ENCODE measurements at regions of chr6 and their contacts with region 1.

Region 1: DNA sequence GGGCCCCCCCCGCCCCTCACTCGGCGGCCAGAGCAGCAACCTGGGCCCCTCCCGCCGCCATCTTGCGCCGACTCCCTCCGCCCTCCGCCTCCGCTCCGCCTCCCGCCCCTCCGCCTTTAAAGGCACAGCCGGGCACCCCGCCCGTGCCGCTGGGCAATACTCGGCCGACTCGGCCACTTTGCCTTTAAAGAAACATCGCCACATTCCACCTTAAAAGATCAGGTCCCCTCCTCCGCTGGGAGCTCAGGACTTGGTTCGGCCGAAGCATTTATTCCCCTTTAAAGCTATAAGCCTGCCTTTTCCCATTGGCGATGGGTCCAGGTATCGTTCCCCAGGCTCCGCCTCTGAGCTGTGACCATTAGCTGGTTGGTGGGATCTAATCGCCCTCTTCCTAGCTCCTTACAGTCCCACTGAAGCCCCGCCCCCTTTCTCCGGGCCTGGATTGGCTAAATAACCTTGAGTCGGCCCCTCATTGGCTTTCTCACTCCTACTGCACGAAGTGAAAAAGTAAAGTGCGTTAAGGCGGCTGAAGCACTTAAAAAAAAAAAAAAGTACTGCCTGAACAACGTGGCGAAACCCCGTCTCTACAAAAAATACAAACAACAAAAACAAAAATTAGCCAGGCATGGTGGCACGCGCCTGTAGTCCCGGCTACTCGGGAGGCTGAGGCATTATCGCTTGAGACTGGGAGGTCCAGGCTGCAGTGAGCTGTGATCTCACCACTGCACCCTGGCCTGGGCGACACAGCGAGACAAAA is at the start of gene ZBTB22:
- DNase-seq: peak; percentile 92
- H3K4me3 ChIP-seq: peak within 1 kb of the TSS; percentile 56
- H3K27ac ChIP-seq: peak within 1 kb of the TSS; percentile 88 to 95
- H3K4me1 ChIP-seq: peaks cover 29 to 53% of the 10 kb centered on the region in 2 experiments; a peak in 3 of 4 replicates
- H3K27me3 ChIP-seq: no peaks in the 10 kb centered on the region
- CTCF ChIP-seq: no peak
- EP300 ChIP-seq: no peak
- RAD21 ChIP-seq: no peak
- polyA plus RNA-seq, gene ZBTB22: 19.5 and 22.2 TPM in 2 replicates

Region 2: DNA sequence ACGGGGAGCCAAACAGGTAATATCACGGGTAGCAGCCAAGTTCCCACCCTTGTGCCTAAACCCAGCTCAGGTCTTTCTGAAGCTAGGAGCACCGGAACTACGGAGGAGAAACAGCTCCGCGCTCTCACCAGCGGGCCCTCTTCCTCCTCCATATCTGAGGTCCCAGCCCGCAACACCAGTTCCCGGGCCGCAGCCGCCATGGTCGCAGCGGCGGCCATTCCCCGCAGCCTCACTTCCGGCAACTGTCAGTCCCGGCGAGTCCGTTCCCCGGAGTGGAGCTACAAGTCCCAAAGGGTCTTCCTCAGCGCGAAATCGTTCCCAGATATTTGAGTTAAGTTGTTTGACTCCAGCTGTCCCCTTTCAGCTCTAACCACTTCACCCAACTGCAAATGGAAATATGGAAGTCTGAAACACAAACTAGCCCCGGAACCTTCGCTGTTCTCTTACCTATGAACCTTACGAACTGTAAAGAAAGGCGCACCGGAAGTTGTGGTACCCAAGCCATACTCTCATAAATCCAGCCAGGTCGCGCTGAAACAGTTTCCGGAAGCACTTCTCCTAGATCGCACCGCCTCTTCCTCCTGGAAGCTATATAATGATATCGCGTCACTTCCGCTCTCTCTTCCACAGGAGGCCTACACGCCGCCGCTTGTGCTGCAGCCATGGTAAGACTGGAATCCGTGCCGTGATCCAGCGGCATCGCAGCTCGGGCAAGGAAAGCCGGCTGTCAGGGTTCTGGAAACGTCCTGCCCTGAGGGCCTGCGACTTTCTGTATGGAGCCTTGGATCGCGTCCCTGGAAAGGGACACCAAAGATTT is 46.2 kb before region 1 on chr6 and contains the starts of genes RPS18 and VPS52:
- CTCF ChIA-PET with region 1: interaction called, 3 read pairs
- POLR2A ChIA-PET with region 1: interaction called, 10 read pairs
- DNase-seq: peak; percentile 89
- H3K4me3 ChIP-seq: peak within 1 kb of the TSS; percentile 76 to 91
- H3K27ac ChIP-seq: peak within 1 kb of the TSS; percentile 88 to 99
- H3K4me1 ChIP-seq: peaks cover 30 to 39% of the 10 kb centered on the region in 2 experiments; a peak in 3 of 4 replicates
- H3K27me3 ChIP-seq: no peaks in the 10 kb centered on the region
- CTCF ChIP-seq: no peak
- EP300 ChIP-seq: no peak
- RAD21 ChIP-seq: no peak
- polyA plus RNA-seq, gene RPS18: 12,112 and 13,423 TPM in 2 replicates
- polyA plus RNA-seq, gene VPS52: 74.0 and 90.7 TPM in 2 replicates

Region 3: GRCh38 chr6:33344701-33345697 is 27.2 kb after region 1 on chr6:
- CTCF ChIA-PET with region 1: interaction called, 16 read pairs
- POLR2A ChIA-PET with region 1: no interaction called
- DNase-seq: peak; percentile 68
- H3K4me3 ChIP-seq: no peak overlapping the region; a peak in 1 of 4 replicates
- H3K27ac ChIP-seq: no peak overlapping the region
- H3K4me1 ChIP-seq: peaks cover 0 to 4% of the 10 kb centered on the region in 2 experiments; a peak in 1 of 4 replicates
- H3K27me3 ChIP-seq: 0 out of 2 replicates have a peak, but pooled peaks cover 3% of the 10 kb centered on the region
- CTCF ChIP-seq: peak; percentile 65
- EP300 ChIP-seq: no peak
- RAD21 ChIP-seq: peak; percentile 60